H1 (cell line): ENCODE measurements at regions of chr10 and their contacts with region 1.

Region 1: DNA sequence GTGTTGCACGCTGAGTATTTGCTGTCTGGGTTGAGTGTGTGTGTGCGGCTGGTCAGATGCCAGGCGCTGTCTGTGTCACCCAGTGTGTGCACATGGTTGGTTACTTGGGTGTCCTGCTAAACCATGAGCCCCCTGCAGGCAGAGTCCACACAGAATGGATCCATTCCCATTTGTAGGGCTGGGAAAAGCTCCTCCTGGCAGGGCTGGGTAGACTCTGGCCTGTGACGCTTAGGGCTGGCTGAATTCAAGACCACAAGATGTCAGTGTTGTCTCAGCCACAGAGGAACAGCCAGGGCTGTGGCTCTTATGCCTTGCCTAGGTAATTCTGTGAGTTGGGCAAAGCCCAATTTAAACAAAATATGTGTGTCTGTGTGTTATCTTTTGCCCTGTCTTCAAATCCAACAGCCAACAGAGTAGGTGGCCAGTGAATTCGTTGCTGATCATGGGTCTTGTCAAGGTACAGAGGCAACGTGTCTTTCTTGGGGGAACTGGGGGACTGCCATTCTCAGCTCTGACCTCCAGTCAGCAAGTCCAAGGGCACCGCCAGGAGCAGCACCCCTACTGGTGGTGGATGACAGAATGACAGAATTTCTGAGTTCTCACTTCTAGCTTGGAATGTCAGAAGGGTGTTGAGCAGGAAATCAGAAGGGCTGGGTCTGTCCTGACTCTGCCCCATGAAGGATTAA is 285.1 kb downstream of the CCSER2 start:
- DNase-seq: peak; percentile 64 to 75
- H3K4me3 ChIP-seq: peak overlapping the region in 2 of 4 experiments; percentile 5 to 37; a peak in 2 of 8 replicates
- H3K27ac ChIP-seq: no peak overlapping the region
- H3K4me1 ChIP-seq: peaks cover 0 to 6% (median 3%) of the 10 kb centered on the region in 4 experiments; a peak in 4 of 7 replicates
- H3K27me3 ChIP-seq: no peaks in the 10 kb centered on the region; a peak in 1 of 7 replicates
- CTCF ChIP-seq: peak; percentile 67 to 87 (median 76)
- EP300 ChIP-seq: no peak
- POLR2A ChIP-seq: no peak
- RAD21 ChIP-seq: peak; percentile 90 to 91

Region 2: DNA sequence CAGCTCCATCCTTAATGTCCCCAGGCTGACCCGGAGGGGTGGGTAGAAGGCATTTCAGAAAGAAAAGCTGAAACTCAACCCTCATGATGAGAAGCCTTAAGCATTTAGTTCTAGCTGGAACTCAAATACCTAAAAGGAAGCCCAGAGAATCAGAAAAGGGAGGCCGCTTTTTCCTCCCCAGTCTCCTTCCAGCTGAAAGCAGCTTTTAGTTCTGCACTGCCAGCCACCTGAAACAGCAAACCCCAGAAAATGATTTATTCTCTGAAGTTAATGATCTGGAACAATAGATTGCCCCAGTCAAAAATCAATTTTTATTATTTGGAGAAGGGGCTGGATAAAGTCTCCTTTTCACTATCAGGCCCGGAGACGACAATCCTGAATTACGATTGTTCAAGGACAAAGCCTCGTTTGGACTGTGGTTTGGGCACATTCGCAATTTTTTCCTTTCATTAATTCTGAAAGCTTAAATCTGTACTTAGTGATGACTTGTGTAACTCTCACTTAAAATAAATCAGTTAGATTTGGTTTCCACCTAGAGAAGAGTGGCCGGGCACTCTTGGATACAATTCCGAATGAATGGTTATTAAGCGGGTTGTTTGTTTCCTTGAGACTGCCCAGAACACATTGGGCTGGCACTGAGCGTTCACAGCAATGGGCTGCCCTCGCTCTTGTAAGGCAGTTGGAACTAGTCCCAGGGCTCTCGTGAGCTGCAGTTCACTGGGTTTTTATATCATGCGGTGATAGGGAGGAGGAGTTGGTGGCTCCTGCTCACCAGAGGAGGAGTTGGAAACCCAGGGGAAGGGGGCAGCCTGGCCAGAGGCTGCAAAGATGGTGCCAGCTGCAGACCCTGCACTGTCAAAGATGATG is 22.9 kb before region 1 on chr10:
- CTCF ChIA-PET with region 1: interaction called, 23 read pairs
- POLR2A ChIA-PET with region 1: no interaction called
- DNase-seq: peak in 1 of 2 experiments; percentile 32
- H3K4me3 ChIP-seq: no peak overlapping the region
- H3K27ac ChIP-seq: no peak overlapping the region
- H3K4me1 ChIP-seq: peaks cover 0 to 12% (median 10%) of the 10 kb centered on the region in 4 experiments; a peak in 5 of 7 replicates
- H3K27me3 ChIP-seq: peaks cover 0 to 3% (median 0%) of the 10 kb centered on the region in 4 experiments; a peak in 1 of 7 replicates
- CTCF ChIP-seq: no peak
- EP300 ChIP-seq: no peak
- POLR2A ChIP-seq: no peak
- RAD21 ChIP-seq: no peak

Region 3: GRCh38 chr10:84632866-84633265 is 19.4 kb after region 1 on chr10:
- CTCF ChIA-PET with region 1: interaction called, 38 read pairs
- POLR2A ChIA-PET with region 1: no interaction called
- DNase-seq: peak in 1 of 2 experiments; percentile 9
- H3K4me3 ChIP-seq: no peak overlapping the region
- H3K27ac ChIP-seq: no peak overlapping the region
- H3K4me1 ChIP-seq: peaks cover 0 to 4% (median 0%) of the 10 kb centered on the region in 4 experiments; a peak in 1 of 7 replicates
- H3K27me3 ChIP-seq: no peaks in the 10 kb centered on the region
- CTCF ChIP-seq: no peak
- EP300 ChIP-seq: no peak
- POLR2A ChIP-seq: no peak
- RAD21 ChIP-seq: no peak

Region 4: GRCh38 chr10:84700668-84701369 is 87.3 kb after region 1 on chr10:
- CTCF ChIA-PET with region 1: interaction called, 11 read pairs
- POLR2A ChIA-PET with region 1: no interaction called
- DNase-seq: no peak
- H3K4me3 ChIP-seq: no peak overlapping the region
- H3K27ac ChIP-seq: no peak overlapping the region
- H3K4me1 ChIP-seq: no peaks in the 10 kb centered on the region
- H3K27me3 ChIP-seq: no peaks in the 10 kb centered on the region
- CTCF ChIP-seq: no peak
- EP300 ChIP-seq: no peak
- POLR2A ChIP-seq: no peak
- RAD21 ChIP-seq: no peak

Region 5: GRCh38 chr10:84743483-84743882 is 130.0 kb after region 1 on chr10:
- CTCF ChIA-PET with region 1: interaction called, 21 read pairs
- POLR2A ChIA-PET with region 1: no interaction called
- DNase-seq: no peak
- H3K4me3 ChIP-seq: no peak overlapping the region
- H3K27ac ChIP-seq: no peak overlapping the region
- H3K4me1 ChIP-seq: no peaks in the 10 kb centered on the region
- H3K27me3 ChIP-seq: no peaks in the 10 kb centered on the region
- CTCF ChIP-seq: peak in 2 of 3 experiments; percentile 57 to 60; a peak in 3 of 4 replicates
- EP300 ChIP-seq: no peak
- POLR2A ChIP-seq: no peak
- RAD21 ChIP-seq: peak; percentile 46 to 51